ENCODE measurements at regions of chr2 and their contacts with region 1.

Region 1: DNA sequence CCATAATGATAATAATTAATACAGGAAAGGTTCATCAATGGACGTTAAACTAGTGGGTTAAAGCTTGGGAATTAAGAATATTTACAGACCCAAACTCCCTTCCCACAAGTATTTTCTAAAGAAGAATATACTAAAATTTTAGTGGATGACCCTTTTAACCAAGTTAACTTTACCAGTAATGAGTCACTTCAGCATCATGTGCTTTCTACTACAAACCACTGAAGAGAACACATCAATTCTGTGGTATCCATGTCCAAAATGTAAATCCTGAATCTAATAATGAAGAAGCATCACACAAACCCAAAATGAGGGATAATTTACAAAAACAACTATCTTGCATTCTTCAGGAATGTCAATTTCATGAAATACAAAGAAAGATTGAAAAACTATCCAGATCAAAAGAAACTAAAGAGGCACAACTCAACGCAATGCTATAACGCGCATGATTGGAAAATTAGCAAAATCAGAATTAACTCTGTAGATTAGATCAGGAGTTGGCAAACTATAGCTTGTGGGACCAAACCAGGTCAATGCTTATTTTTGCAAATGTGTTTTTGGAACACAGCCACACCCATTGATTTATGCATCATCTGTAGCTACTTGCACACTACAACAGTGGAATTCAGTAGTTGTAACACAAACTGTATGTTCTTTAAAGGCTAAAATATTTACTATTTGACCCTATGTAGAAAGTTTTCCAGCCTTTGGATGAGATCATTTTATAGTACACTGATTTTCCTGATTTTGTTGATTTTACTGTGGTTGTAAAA is 27.5 kb downstream of the COPS8 start:
- DNase-seq: no peak
- H3K4me3 Mint-ChIP-seq: no peak overlapping the region
- H3K27ac Mint-ChIP-seq: no peak overlapping the region
- H3K4me1 Mint-ChIP-seq: peaks cover 12% of the 10 kb centered on the region
- H3K27me3 Mint-ChIP-seq: no peaks in the 10 kb centered on the region
- CTCF ChIP-seq: no peak

Region 2: GRCh38 chr2:237101118-237101979 is 11.9 kb before region 1 on chr2:
- CTCF ChIA-PET with region 1: interaction called, 5 read pairs
- POLR2A ChIA-PET with region 1: interaction called, 16 read pairs
- intact Hi-C with region 1: no loop called
- DNase-seq: no peak
- H3K4me3 Mint-ChIP-seq: no peak overlapping the region
- H3K27ac Mint-ChIP-seq: peak overlapping the region; percentile 51
- H3K4me1 Mint-ChIP-seq: peaks cover 16% of the 10 kb centered on the region
- H3K27me3 Mint-ChIP-seq: no peaks in the 10 kb centered on the region
- CTCF ChIP-seq: no peak

Measured in MCF 10A (cell line).